ENCODE measurements at regions of chr11 and their contacts with region 1.

Region 1: DNA sequence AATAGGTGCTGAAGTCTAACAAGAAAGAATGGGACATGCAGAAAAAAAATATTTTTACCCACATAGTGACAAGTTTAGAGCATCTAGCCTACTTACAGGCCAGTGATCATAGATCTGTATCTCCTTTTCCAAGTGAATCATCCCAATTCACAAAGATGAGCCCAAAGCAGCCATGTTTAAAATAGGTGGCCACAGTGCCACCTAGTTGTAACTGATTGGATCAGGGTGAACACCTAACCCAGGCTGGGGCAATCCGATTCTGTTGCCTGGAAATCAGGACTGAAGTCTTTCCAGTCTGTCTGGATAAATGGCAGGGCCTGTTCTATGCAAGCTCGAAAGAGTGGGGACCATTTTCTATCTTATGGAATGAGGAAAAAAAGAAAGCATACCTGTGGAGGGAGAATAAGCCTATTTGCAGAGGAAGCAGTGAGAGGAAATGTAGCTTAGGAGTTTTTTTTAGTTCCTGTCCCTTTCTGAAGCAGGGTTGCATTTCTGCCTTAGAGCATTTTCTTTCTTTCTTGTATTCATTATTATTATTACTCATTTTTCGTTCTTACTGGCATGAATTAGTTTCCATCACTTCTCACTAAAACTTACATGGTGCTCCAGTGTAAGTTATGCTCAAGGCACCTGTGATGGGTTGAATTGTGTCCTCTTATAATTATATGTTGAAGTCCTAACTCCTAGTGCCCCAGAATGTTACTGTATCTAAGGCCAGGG is 113.2 kb upstream of the RAG2 start:
- DNase-seq: no peak
- ATAC-seq: no peak
- H3K4me3 ChIP-seq: no peak overlapping the region
- H3K4me3 Mint-ChIP-seq: no peak overlapping the region
- H3K27ac ChIP-seq: no peak overlapping the region
- H3K27ac Mint-ChIP-seq: no peak overlapping the region
- H3K4me1 ChIP-seq: no peaks in the 10 kb centered on the region
- H3K4me1 Mint-ChIP-seq: no peaks in the 10 kb centered on the region
- H3K27me3 ChIP-seq: peaks cover 2 to 5% of the 10 kb centered on the region in 2 experiments
- H3K27me3 Mint-ChIP-seq: peaks cover 58% of the 10 kb centered on the region
- CTCF ChIP-seq: no peak

Region 2: DNA sequence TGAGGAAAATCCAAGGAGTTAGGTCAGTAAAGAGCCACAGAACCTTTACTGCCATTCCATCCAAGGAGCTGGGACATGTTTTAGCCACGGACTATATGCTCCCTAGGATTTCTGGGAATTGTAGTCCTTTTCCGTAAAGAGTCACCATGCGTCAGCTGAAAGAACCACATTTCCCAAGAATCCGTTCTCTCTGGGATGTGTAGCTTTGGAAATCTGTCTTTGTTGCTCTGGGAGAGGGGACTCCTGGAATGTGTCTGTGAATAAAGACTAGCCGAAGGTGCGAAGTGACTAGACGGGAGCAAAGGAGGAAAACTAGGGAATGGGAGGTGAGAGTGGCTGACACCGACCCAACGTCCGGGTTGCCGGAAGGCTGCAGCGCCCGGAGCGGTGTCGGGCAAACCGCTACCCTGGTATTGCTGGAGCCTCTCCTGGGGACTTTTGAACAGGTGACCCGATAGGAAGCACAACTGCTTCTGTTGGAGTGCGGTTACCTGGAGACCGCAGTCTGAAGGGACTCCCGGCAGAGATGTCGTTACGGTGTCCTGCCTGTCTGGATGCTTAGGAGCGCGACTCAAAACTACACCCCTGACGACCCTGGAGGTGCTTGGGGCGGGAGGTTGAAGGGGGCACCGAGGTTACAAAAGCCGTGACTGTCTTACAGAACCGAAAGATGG is 116.8 kb before region 1 on chr11 and contains the start of gene IFTAP:
- CTCF ChIA-PET with region 1: no interaction called
- POLR2A ChIA-PET with region 1: no interaction called
- intact Hi-C with region 1: loop called in 1 of 2 experiments (anchors 1 kb)
- DNase-seq: peak in 8 of 14 experiments; percentile 2 to 66 (median 26)
- ATAC-seq: peak; percentile 81
- H3K4me3 ChIP-seq: peak within 1 kb of the TSS; percentile 62
- H3K4me3 Mint-ChIP-seq: peak within 1 kb of the TSS; percentile 97
- H3K27ac ChIP-seq: no peak within 1 kb of the TSS
- H3K27ac Mint-ChIP-seq: no peak within 1 kb of the TSS
- H3K4me1 ChIP-seq: peaks cover 7% of the 10 kb centered on the region
- H3K4me1 Mint-ChIP-seq: peaks cover 16% of the 10 kb centered on the region
- H3K27me3 ChIP-seq: peaks cover 4 to 23% of the 10 kb centered on the region in 2 experiments
- H3K27me3 Mint-ChIP-seq: peaks cover 50% of the 10 kb centered on the region
- CTCF ChIP-seq: no peak
- total RNA-seq, gene IFTAP: 1.7 to 1.9 TPM

Measured in CD4-positive, alpha-beta T cell (primary cell).